ENCODE measurements at regions of chr1 and their contacts with region 1.

Region 1: GRCh38 chr1:192477630-192478029 is 97.9 kb upstream of the RGS1 start:
- DNase-seq: no peak
- H3K4me3 ChIP-seq: no peak overlapping the region
- H3K27ac ChIP-seq: peak overlapping the region in 2 of 4 donors; percentile 34 to 40
- H3K4me1 ChIP-seq: peaks cover 0 to 11% (median 0%) of the 10 kb centered on the region in 4 donors
- H3K27me3 ChIP-seq: peaks cover 4% of the 10 kb centered on the region
- CTCF ChIP-seq: peak; percentile 29 to 65 (median 43)
- EP300 ChIP-seq: no peak
- POLR2A ChIP-seq: no peak

Region 2: DNA sequence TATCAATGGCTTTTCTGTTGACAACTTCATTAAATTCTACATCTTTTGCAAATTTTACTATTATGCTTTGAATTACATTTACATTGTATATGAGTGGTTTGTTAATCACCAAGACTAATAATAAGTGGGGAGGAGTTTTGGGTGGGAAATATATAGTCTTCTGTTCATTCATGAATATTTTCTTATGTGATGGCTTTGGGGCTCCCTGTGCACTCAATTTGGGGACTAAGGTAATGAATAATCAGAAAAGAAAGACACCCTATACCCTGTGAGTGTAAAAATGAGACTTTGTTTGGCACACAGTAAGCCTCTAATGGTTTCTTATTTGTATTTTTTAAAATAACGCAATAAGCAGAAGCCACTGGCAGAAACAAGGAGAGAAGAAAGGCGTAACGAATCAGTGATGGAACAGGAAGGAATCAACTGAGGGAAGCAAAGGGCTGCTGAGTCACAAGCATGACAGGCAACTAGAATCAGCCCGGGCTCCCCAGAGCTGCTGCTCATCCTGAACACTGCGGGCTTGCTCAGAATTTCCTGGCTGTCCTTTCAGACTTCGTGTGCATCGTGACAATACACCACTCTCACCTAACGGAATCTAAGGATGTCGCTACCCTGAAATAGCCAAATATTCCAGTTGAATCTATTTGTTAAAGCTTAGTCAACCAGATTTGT is 310.4 kb after region 1 on chr1:
- in situ Hi-C with region 1: loop called in 3 of 4 experiments (anchors 25 kb)
- intact Hi-C with region 1: no loop called
- DNase-seq: no peak
- H3K4me3 ChIP-seq: no peak overlapping the region
- H3K27ac ChIP-seq: peak overlapping the region in 2 of 4 donors; percentile 29 to 47
- H3K4me1 ChIP-seq: no peaks in the 10 kb centered on the region
- H3K27me3 ChIP-seq: no peaks in the 10 kb centered on the region
- CTCF ChIP-seq: no peak
- EP300 ChIP-seq: no peak
- POLR2A ChIP-seq: no peak

Region 3: DNA sequence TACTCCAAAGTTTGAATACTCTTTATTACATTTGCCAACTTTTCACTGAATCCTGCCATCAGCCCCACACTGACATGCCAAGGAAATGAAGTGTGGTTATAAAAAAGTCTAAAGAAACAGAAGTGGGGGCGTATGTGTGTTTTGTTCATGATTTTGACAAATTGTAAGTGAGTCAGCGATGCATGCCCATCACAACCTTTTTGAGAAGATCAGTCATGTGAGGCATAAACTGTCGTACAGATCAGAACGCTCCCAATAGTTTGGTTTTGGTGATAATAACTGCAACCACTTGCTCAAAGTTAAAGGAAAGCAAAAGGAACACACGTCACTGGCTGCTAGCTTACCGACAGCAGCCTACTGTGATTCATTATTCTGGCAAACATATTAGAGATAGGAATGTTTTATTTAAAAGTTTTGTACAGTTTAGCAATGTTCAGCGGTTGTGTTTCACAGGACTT is 426.8 kb after region 1 on chr1:
- in situ Hi-C with region 1: loop called in 1 of 4 experiments (anchors 25 kb)
- intact Hi-C with region 1: no loop called
- DNase-seq: no peak
- H3K4me3 ChIP-seq: no peak overlapping the region
- H3K27ac ChIP-seq: peak overlapping the region; percentile 40 to 78 (median 72)
- H3K4me1 ChIP-seq: peaks cover 0 to 7% (median 1%) of the 10 kb centered on the region in 4 donors
- H3K27me3 ChIP-seq: no peaks in the 10 kb centered on the region
- CTCF ChIP-seq: no peak
- EP300 ChIP-seq: peak; percentile 80
- POLR2A ChIP-seq: no peak

Region 4: GRCh38 chr1:193031438-193031837 is 553.8 kb after region 1 on chr1:
- in situ Hi-C with region 1: loop called in 1 of 4 experiments (anchors 25 kb)
- intact Hi-C with region 1: no loop called
- DNase-seq: no peak
- H3K4me3 ChIP-seq: no peak overlapping the region
- H3K27ac ChIP-seq: no peak overlapping the region
- H3K4me1 ChIP-seq: peaks cover 0 to 12% (median under 1%) of the 10 kb centered on the region in 4 donors
- H3K27me3 ChIP-seq: no peaks in the 10 kb centered on the region
- CTCF ChIP-seq: peak; percentile 13 to 31 (median 21)
- EP300 ChIP-seq: no peak
- POLR2A ChIP-seq: no peak